Activated CD4-positive, alpha-beta T cell treated with anti-CD3 and anti-CD28 coated beads, Interleukin-2, amount 10 ng/mL, durations not matched to agents 24 days and 14 days (primary cell): ENCODE measurements at regions of chr1 and their contacts with region 1.

Region 1: GRCh38 chr1:28581536-28582247 is 10.4 kb upstream of the RAB42 start:
- DNase-seq: peak; percentile 98
- H3K4me3 Mint-ChIP-seq: peak overlapping the region; percentile 94
- H3K27ac Mint-ChIP-seq: peak overlapping the region; percentile 97
- H3K4me1 Mint-ChIP-seq: peaks cover 29% of the 10 kb centered on the region
- H3K27me3 Mint-ChIP-seq: no peaks in the 10 kb centered on the region

Region 2: DNA sequence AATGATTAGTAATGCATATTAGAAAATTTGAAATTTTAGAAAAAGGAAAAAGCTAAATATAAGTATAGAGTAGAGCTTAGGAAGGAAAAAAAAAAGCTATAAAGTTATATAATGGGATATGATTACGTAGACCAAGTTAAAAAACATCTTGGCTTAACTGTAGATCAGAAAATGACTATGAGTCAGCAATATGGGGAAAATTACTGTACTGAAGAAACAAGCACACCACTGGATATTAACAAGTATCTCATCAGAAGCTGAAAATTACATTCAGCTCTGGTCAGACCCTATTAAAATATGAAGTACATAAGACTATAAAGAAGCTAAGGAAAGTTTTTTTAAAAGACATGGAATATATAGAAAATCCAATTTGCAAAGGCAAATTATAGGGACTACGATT is 368.4 kb before region 1 on chr1:
- intact Hi-C with region 1: no loop called
- DNase-seq: no peak
- H3K4me3 Mint-ChIP-seq: no peak overlapping the region
- H3K27ac Mint-ChIP-seq: no peak overlapping the region
- H3K4me1 Mint-ChIP-seq: peaks cover 5% of the 10 kb centered on the region
- H3K27me3 Mint-ChIP-seq: no peaks in the 10 kb centered on the region

Region 3: GRCh38 chr1:28505406-28506187 is 76.1 kb before region 1 on chr1 and contains the start of gene RCC1:
- intact Hi-C with region 1: loop called (anchors 1 kb)
- DNase-seq: peak; percentile 99
- H3K4me3 Mint-ChIP-seq: peak within 1 kb of the TSS; percentile 92
- H3K27ac Mint-ChIP-seq: peak within 1 kb of the TSS; percentile 99
- H3K4me1 Mint-ChIP-seq: peaks cover 29% of the 10 kb centered on the region
- H3K27me3 Mint-ChIP-seq: peaks cover 2% of the 10 kb centered on the region
- total RNA-seq, gene RCC1: 143 and 145 TPM in 2 replicates

Region 4: DNA sequence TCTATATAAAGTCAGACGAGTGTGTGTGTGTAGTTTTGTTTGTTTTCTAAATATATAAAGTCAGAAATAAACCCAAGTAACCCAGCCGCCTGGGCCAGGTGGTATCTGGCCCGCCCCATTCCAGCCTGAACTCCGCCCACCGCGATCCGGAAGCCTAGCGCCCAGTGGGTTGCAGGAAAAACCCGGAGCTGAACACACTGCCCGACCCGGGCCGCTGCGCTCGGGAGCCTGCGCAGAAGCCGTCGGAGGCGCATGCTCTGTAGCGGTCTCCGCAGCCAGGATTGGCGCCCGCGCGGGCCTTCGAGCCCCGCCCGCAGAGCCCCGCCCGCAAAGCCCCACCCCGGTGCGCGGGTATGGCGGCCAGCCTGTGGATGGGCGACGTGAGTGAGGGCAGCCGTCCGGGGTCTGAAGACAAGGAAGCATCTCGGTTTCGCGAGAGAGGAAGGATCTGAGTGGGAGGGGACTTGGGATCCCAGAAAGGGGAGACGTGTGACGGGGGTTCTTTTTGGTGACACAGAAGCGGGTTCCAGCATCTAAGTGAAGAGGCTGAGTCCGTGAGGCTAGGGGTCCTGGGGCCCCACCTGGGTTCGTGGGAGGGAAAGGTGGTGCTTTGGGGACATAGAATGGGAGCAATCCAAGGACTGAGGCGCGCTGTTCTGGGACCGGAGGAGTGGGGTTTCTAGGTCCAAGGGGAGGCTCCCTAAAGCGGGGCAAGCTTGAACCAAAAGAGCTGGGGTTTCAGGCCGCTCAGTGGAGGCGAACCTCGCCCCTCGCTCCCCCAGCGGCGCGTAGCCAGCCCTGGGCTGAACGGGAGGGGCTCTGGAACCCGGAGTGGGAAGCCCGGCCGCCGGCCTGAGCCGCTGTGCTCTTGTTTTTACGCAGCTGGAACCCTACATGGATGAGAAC is 28.7 kb before region 1 on chr1 and contains the start of gene TRNAU1AP:
- intact Hi-C with region 1: loop called (anchors 1 kb)
- DNase-seq: peak; percentile 99
- H3K4me3 Mint-ChIP-seq: peak within 1 kb of the TSS; percentile 100
- H3K27ac Mint-ChIP-seq: peak within 1 kb of the TSS; percentile 99
- H3K4me1 Mint-ChIP-seq: peaks cover 17% of the 10 kb centered on the region
- H3K27me3 Mint-ChIP-seq: no peaks in the 10 kb centered on the region
- total RNA-seq, gene TRNAU1AP: 47.5 and 50.7 TPM in 2 replicates

Region 5: GRCh38 chr1:28642847-28643635 is 61.3 kb after region 1 on chr1 and contains the start of gene TAF12:
- intact Hi-C with region 1: loop called (anchors 1 kb)
- DNase-seq: peak; percentile 96
- H3K4me3 Mint-ChIP-seq: peak within 1 kb of the TSS; percentile 98
- H3K27ac Mint-ChIP-seq: peak within 1 kb of the TSS; percentile 99
- H3K4me1 Mint-ChIP-seq: peaks cover 39% of the 10 kb centered on the region
- H3K27me3 Mint-ChIP-seq: no peaks in the 10 kb centered on the region
- total RNA-seq, gene TAF12: 31.7 and 33.8 TPM in 2 replicates

Region 6: GRCh38 chr1:28910379-28911115 is 328.9 kb after region 1 on chr1:
- intact Hi-C with region 1: no loop called
- DNase-seq: no peak
- H3K4me3 Mint-ChIP-seq: no peak overlapping the region
- H3K27ac Mint-ChIP-seq: no peak overlapping the region
- H3K4me1 Mint-ChIP-seq: peaks cover 20% of the 10 kb centered on the region
- H3K27me3 Mint-ChIP-seq: no peaks in the 10 kb centered on the region